Ascending aorta (tissue), 2 donors: ENCODE measurements at regions of chr16 and their contacts with region 1.

Region 1: GRCh38 chr16:75238132-75238852 is 13.1 kb downstream of the BCAR1 start:
- DNase-seq: peak; percentile 67 to 96
- H3K4me3 ChIP-seq: peak overlapping the region; percentile 18 to 44
- H3K27ac ChIP-seq: peak overlapping the region; percentile 91 to 94
- H3K4me1 ChIP-seq: peaks cover 34 to 80% of the 10 kb centered on the region in 2 donors
- H3K27me3 ChIP-seq: no peaks in the 10 kb centered on the region
- CTCF ChIP-seq: peak in 2 of 3 experiments; percentile 10 to 19

Region 2: GRCh38 chr16:75265845-75266701 is 27.8 kb after region 1 on chr16:
- intact Hi-C with region 1: loop called (anchors 1 kb)
- DNase-seq: peak in 1 of 2 donors; percentile 86
- H3K4me3 ChIP-seq: peak overlapping the region; percentile 76 to 86
- H3K27ac ChIP-seq: peak overlapping the region; percentile 90 to 95
- H3K4me1 ChIP-seq: peaks cover 34 to 38% of the 10 kb centered on the region in 2 donors
- H3K27me3 ChIP-seq: no peaks in the 10 kb centered on the region
- CTCF ChIP-seq: no peak

Region 3: DNA sequence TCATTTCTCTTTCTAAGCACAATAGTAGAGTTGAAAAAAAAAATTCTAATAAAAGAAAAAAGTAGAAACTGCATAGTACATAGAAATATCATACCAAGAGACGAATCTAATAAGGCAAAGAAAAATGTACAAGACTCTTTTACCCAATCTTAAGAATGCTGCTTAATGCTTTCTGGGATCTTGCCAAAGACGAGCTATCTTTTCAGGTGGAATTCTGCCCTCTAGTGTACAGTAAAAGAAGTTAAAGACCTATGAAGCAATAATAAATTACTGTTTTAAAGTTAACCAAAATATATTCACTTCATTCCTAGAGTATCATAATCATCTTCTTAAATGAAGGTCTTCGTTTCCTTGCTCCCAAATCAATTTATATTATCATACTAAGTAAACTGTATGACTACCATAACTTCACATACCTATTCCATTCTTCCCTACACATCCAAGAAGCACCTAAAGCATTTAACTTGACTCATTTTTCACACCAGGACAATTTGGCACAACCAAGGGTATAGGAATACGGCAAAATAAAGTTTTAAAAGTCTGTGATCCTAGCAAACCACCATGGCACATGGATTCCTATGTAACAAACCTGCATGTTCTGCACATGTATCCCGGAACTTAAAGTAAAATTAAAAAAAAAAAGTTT is 147.3 kb after region 1 on chr16:
- intact Hi-C with region 1: loop called (anchors 1 kb)
- DNase-seq: no peak
- H3K4me3 ChIP-seq: no peak overlapping the region
- H3K27ac ChIP-seq: peak overlapping the region; percentile 19 to 32
- H3K4me1 ChIP-seq: peaks cover 5 to 32% of the 10 kb centered on the region in 2 donors
- H3K27me3 ChIP-seq: no peaks in the 10 kb centered on the region
- CTCF ChIP-seq: peak; percentile 58 to 72 (median 68)

Region 4: DNA sequence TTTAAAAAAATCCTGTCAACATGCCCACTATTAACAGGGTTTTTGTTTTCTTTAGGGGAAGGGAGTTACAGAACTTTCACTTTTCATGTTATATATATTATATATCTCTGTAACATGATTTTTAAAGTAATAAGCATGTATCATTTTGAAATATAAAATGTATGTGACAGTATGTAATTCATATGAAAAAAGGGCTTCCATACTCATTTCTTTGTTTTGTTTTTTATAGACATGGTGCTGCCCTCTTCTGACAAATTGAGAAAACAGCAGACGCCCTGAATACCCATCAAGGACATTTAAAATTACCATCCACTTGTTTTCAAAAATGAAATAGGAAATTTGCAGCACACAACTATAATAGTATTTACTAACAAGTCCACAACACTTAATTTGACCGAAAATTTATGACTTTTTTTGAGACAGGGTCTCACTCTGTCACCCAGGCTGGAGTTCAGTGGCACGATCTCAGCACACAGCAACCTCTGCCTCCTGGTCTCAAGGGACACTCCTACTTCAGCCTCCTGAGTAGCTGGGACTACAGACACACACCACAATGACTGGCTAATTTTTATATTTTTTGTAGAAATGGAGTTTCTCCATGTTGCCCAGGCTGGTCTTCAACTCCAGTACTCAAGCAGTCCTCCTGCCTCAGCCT is 164.7 kb after region 1 on chr16:
- intact Hi-C with region 1: loop called (anchors 1 kb)
- DNase-seq: no peak
- H3K4me3 ChIP-seq: no peak overlapping the region
- H3K27ac ChIP-seq: peak overlapping the region; percentile 83 to 86
- H3K4me1 ChIP-seq: peaks cover 3 to 14% of the 10 kb centered on the region in 2 donors
- H3K27me3 ChIP-seq: no peaks in the 10 kb centered on the region
- CTCF ChIP-seq: peak; percentile 71 to 77 (median 73)